HCT116 (cell line): ENCODE measurements at regions of chr1 and their contacts with region 1.

Region 1: DNA sequence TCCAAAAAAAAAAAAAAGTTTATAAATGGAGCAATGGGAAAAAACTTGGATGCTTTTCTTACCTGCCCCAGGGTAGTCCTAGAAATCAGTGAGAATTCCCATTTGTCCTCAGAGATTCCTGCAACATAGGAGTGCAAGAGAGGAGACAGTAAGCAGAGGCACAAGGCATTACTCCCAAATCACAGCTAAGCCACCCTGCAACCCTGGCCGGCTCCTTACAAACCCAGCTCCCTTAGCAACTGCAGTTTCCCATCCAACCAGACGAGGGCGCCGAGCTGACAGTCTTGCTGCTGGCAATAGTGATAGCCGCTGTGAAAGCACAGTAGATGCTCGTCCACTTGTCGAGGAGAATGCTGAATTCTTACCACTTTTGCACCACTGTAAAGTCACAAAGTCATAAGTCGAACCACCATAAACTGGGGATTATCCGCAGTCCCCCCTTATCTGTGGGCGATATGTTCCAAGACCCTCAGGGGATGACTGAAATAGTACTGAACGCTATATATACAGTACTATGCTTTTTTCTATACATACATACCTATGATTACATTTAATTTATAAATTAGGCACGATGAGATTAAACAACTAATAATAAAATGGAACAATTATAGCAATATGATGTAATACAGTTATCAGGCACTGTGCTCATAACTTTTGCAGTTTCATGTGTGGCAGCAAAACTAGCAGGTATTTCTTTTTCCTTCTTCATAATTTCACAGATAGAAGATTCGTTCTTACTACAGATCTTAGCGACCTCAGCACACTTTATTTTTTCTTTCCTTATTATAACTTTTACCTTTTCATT is 6.0 kb upstream of the PITHD1 start:
- DNase-seq: peak; percentile 64
- ATAC-seq: peak; percentile 97
- H3K4me3 ChIP-seq: no peak overlapping the region
- H3K27ac ChIP-seq: no peak overlapping the region
- H3K4me1 ChIP-seq: peaks cover 4 to 6% of the 10 kb centered on the region in 2 experiments; a peak in 2 of 4 replicates
- H3K27me3 ChIP-seq: no peaks in the 10 kb centered on the region
- CTCF ChIP-seq: peak; percentile 85 to 97 (median 93)
- POLR2A ChIP-seq: no peak
- RAD21 ChIP-seq: peak; percentile 90

Region 2: DNA sequence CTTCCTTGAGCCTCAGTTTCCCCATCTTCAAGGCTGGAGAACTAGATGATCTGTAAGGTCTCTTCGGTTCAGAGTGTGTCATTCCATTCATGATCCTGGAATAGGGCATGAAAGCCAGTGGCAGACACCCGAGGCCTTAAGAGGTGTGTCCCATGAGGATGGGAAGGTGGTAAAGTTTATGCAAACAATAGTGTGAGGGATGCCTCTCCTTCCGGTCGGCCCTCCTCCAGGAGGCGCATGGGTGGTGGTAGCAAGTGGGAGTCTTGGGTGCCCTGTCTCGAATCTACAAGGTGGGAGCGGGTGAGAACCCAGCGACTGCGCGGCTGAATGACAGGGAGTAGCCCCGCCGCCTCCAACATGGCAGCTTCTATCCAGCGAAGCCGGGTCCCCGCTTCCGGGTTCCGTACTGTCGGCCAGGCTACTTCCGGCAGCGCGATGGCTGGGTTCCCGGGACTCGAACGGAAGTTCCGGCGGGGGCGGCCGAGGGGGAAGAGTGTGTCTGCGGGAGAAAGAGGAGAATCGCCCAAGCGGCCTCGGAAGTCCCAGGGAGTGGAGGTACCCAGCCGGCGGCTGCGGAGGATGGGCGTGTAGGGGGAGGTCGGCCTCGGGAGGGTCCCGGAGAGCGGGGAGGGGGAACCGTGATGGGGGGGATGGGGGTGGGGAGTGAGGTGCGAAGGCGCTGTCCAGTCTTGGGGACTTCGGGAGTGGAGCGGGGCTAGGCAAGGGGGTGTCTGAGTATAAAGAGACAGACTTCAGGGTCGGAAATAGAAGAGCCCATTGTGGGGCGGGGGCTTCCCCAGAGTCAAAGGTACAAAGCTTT is 18.7 kb after region 1 on chr1 and contains the start of gene LYPLA2:
- CTCF ChIA-PET with region 1: interaction called, 15 read pairs
- POLR2A ChIA-PET with region 1: no interaction called
- RAD21 ChIA-PET with region 1: interaction called in 1 of 2 experiments, 4 read pairs
- intact Hi-C with region 1: no loop called
- DNase-seq: peak; percentile 75
- ATAC-seq: peak; percentile 77
- H3K4me3 ChIP-seq: peak within 1 kb of the TSS; percentile 89 to 95
- H3K27ac ChIP-seq: peak within 1 kb of the TSS; percentile 79
- H3K4me1 ChIP-seq: peaks cover 31 to 49% of the 10 kb centered on the region in 2 experiments
- H3K27me3 ChIP-seq: no peaks in the 10 kb centered on the region
- CTCF ChIP-seq: no peak
- POLR2A ChIP-seq: no peak
- RAD21 ChIP-seq: no peak
- total RNA-seq, gene LYPLA2: 78.0 TPM

Region 3: DNA sequence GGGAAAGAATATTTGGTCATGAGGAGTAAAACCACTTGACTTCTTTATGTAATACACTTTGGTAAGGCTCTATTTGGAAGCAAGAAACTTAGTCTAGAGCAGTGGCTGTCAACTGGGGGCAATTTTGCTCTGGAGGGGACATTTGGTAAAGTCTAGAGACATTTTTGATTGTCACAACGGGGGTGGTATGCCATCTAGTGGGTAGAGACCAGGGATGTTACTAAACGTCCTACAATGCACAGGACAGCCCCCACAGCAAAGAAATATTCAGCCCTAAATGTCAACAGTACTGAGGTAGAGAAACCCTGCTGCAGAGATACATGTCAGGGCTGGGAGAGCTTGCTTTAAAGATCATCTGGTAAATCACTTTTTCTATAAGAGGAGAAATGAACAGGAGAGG is 82.3 kb after region 1 on chr1:
- CTCF ChIA-PET with region 1: interaction called, 6 read pairs
- POLR2A ChIA-PET with region 1: no interaction called
- RAD21 ChIA-PET with region 1: no interaction called
- intact Hi-C with region 1: loop called (anchors 1 kb)
- DNase-seq: no peak
- ATAC-seq: peak; percentile 82
- H3K4me3 ChIP-seq: no peak overlapping the region
- H3K27ac ChIP-seq: no peak overlapping the region
- H3K4me1 ChIP-seq: no peaks in the 10 kb centered on the region
- H3K27me3 ChIP-seq: no peaks in the 10 kb centered on the region
- CTCF ChIP-seq: peak in 2 of 3 experiments; percentile 25 to 41; a peak in 3 of 6 replicates
- POLR2A ChIP-seq: no peak
- RAD21 ChIP-seq: peak; percentile 55

Region 4: GRCh38 chr1:23867953-23868556 is 95.8 kb after region 1 on chr1 and contains the start of gene FUCA1:
- CTCF ChIA-PET with region 1: interaction called, 3 read pairs
- POLR2A ChIA-PET with region 1: no interaction called
- RAD21 ChIA-PET with region 1: no interaction called
- intact Hi-C with region 1: loop called (anchors 5 kb)
- DNase-seq: peak; percentile 90
- ATAC-seq: peak; percentile 94
- H3K4me3 ChIP-seq: peak within 1 kb of the TSS; percentile 74 to 83
- H3K27ac ChIP-seq: peak within 1 kb of the TSS; percentile 63; the same call in 1 of the 2 replicates
- H3K4me1 ChIP-seq: peaks cover 34 to 39% of the 10 kb centered on the region in 2 experiments
- H3K27me3 ChIP-seq: no peaks in the 10 kb centered on the region
- CTCF ChIP-seq: peak; percentile 84 to 91 (median 85)
- POLR2A ChIP-seq: peak; percentile 55
- RAD21 ChIP-seq: peak; percentile 74
- total RNA-seq, gene FUCA1: 20.7 TPM

Region 5: GRCh38 chr1:23916209-23917131 is 144.2 kb after region 1 on chr1:
- CTCF ChIA-PET with region 1: interaction called, 62 read pairs
- POLR2A ChIA-PET with region 1: no interaction called
- RAD21 ChIA-PET with region 1: interaction called, 7 to 10 read pairs
- intact Hi-C with region 1: loop called (anchors 1 kb)
- DNase-seq: peak; percentile 81
- ATAC-seq: peak; percentile 97
- H3K4me3 ChIP-seq: no peak overlapping the region
- H3K27ac ChIP-seq: no peak overlapping the region
- H3K4me1 ChIP-seq: peaks cover 12 to 38% of the 10 kb centered on the region in 2 experiments
- H3K27me3 ChIP-seq: no peaks in the 10 kb centered on the region
- CTCF ChIP-seq: peak; percentile 80 to 82 (median 82)
- POLR2A ChIP-seq: no peak
- RAD21 ChIP-seq: peak; percentile 94